ENCODE measurements at regions of chr14 and their contacts with region 1.

Region 1: GRCh38 chr14:95689441-95689840 is 3.2 kb downstream of the TCL1B start:
- DNase-seq: no peak

Region 2: GRCh38 chr14:95840094-95840700 is 150.8 kb after region 1 on chr14:
- intact Hi-C with region 1: no loop called
- DNase-seq: no peak

Region 3: DNA sequence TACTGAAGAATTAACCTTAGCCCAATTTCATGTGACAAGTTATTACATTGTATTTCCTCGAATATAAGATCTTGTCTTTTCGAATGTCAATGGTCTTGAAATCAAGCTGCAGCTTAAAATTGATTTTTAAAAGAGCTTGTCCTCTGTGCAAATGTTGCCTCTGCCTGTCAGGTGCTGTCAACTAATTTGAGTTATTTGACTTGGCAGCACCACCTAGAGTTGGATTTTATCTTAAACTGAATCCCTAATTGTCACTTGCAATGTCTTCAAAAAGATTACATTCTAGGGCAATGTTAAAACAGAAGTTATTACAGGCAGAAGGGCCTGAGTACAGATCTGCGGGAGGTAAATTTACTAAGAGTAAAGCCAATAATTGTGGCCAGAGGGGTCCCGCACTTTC is 161.0 kb after region 1 on chr14:
- intact Hi-C with region 1: loop called in 1 of 2 experiments (anchors 2 kb)
- DNase-seq: no peak

Measured in posterior vena cava (tissue), 2 donors.